WTC11 (cell line): ENCODE measurements at regions of chr14 and their contacts with region 1.

Region 1: DNA sequence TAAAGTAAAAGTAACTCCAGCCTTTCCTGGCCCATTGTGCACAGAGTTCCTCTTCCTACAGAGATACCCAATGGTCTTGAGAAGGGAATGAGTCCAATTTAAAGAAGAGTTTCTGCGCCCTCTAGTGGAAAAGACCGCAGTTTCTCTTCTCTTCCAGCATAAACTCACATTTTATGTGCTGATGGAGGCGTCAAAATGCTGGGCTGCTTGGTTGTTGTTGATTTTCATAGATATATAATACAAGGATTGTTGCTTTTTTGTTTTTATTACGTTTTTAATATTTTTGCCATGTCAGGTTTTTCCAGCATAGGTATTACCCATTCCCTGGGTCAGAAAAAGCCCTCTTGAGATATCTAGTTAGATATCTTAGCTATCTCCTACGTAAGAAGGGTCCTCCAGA is 356.9 kb upstream of the STXBP6 start:
- DNase-seq: peak; percentile 59
- ATAC-seq: peak; percentile 76
- H3K4me3 Mint-ChIP-seq: no peak overlapping the region
- H3K27ac Mint-ChIP-seq: no peak overlapping the region
- H3K4me1 Mint-ChIP-seq: no peaks in the 10 kb centered on the region
- H3K27me3 Mint-ChIP-seq: peaks cover 3% of the 10 kb centered on the region; the same call in 1 of the 2 replicates
- CTCF ChIP-seq: peak; percentile 68

Region 2: GRCh38 chr14:25308244-25308643 is 98.6 kb before region 1 on chr14:
- CTCF ChIA-PET with region 1: interaction called, 14 read pairs
- POLR2A ChIA-PET with region 1: no interaction called
- DNase-seq: peak; percentile 61
- ATAC-seq: peak; percentile 99
- H3K4me3 Mint-ChIP-seq: no peak overlapping the region
- H3K27ac Mint-ChIP-seq: no peak overlapping the region
- H3K4me1 Mint-ChIP-seq: no peaks in the 10 kb centered on the region
- H3K27me3 Mint-ChIP-seq: no peaks in the 10 kb centered on the region; the same call in 1 of the 2 replicates
- CTCF ChIP-seq: no peak

Region 3: DNA sequence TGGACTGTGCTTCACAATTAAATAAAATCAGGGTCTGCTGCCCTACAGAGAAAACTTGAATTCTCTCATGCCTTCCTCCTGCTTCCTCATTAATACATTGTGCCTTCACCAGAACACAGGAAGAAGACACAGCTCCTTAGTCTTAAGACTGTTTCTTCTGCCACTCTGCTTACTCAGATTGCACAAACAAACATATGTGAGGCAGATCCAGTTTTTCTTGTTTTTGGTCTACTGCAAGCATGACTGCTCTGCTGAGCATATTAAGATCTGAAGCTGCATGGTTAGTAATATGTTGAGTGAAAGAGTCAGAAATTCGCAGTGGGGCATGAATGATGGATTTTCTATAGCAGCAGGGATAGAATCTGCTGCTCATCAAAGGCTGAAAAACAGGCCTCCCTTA is 35.8 kb before region 1 on chr14:
- CTCF ChIA-PET with region 1: no interaction called
- POLR2A ChIA-PET with region 1: no interaction called
- DNase-seq: no peak
- ATAC-seq: no peak
- H3K4me3 Mint-ChIP-seq: no peak overlapping the region
- H3K27ac Mint-ChIP-seq: no peak overlapping the region
- H3K4me1 Mint-ChIP-seq: no peaks in the 10 kb centered on the region; the same call in 1 of the 2 replicates
- H3K27me3 Mint-ChIP-seq: no peaks in the 10 kb centered on the region
- CTCF ChIP-seq: no peak